ENCODE measurements at regions of chr1 and their contacts with region 1.

Region 1: GRCh38 chr1:183915625-183916510 is 110.9 kb downstream of the RGL1 start:
- DNase-seq: peak; percentile 44 to 87 (median 70)
- ATAC-seq: peak; percentile 99
- H3K4me3 ChIP-seq: no peak overlapping the region
- H3K4me3 Mint-ChIP-seq: peak overlapping the region; percentile 0
- H3K27ac ChIP-seq: no peak overlapping the region
- H3K27ac Mint-ChIP-seq: peak overlapping the region; percentile 30
- H3K4me1 ChIP-seq: peaks cover 4% of the 10 kb centered on the region
- H3K4me1 Mint-ChIP-seq: peaks cover 10% of the 10 kb centered on the region
- H3K27me3 ChIP-seq: no peaks in the 10 kb centered on the region
- H3K27me3 Mint-ChIP-seq: no peaks in the 10 kb centered on the region
- CTCF ChIP-seq: peak; percentile 83

Region 2: GRCh38 chr1:183281553-183282091 is 634.2 kb before region 1 on chr1:
- CTCF ChIA-PET with region 1: interaction called, 6 read pairs
- POLR2A ChIA-PET with region 1: no interaction called
- intact Hi-C with region 1: loop called (anchors 2 kb)
- DNase-seq: peak; percentile 38 to 77 (median 60)
- ATAC-seq: peak; percentile 55
- H3K4me3 ChIP-seq: no peak overlapping the region
- H3K4me3 Mint-ChIP-seq: no peak overlapping the region
- H3K27ac ChIP-seq: no peak overlapping the region
- H3K27ac Mint-ChIP-seq: no peak overlapping the region
- H3K4me1 ChIP-seq: no peaks in the 10 kb centered on the region
- H3K4me1 Mint-ChIP-seq: no peaks in the 10 kb centered on the region
- H3K27me3 ChIP-seq: no peaks in the 10 kb centered on the region
- H3K27me3 Mint-ChIP-seq: peaks cover 7% of the 10 kb centered on the region
- CTCF ChIP-seq: peak; percentile 67

Region 3: DNA sequence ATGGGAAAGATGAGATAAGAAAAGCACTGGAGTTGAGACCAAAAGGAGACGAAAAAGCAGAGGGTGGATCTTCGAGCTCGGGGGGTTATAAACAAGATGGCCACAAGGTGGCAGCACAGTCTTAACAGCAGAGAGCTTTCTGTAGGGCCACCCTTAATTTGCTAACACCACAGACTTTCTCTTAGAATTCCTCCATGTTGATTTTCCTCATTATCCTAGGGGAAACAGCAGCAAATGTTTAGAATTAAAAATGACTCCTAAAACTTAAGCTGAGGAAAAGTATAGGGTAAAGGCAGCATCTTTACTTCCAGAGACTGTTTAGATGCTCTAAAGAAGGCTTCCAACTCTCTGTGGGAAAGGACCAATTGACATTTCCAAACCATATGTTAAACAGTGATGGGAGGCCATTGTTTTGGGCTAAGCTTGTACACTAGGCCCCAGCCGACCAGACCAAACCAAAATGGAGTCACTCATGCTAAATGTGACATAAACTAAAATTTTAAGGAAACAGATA is 260.2 kb before region 1 on chr1:
- CTCF ChIA-PET with region 1: interaction called, 172 read pairs
- POLR2A ChIA-PET with region 1: interaction called, 4 read pairs
- intact Hi-C with region 1: loop called (anchors 1 kb)
- DNase-seq: peak; percentile 37 to 83 (median 77)
- ATAC-seq: peak; percentile 84
- H3K4me3 ChIP-seq: no peak overlapping the region
- H3K4me3 Mint-ChIP-seq: no peak overlapping the region
- H3K27ac ChIP-seq: no peak overlapping the region
- H3K27ac Mint-ChIP-seq: no peak overlapping the region
- H3K4me1 ChIP-seq: peaks cover 19% of the 10 kb centered on the region
- H3K4me1 Mint-ChIP-seq: peaks cover 29% of the 10 kb centered on the region
- H3K27me3 ChIP-seq: no peaks in the 10 kb centered on the region
- H3K27me3 Mint-ChIP-seq: no peaks in the 10 kb centered on the region
- CTCF ChIP-seq: peak; percentile 85

Region 4: GRCh38 chr1:183739741-183740271 is 176.1 kb before region 1 on chr1:
- CTCF ChIA-PET with region 1: interaction called, 3 read pairs
- POLR2A ChIA-PET with region 1: no interaction called
- intact Hi-C with region 1: loop called in 1 of 2 experiments (anchors 1 kb)
- DNase-seq: no peak
- ATAC-seq: no peak
- H3K4me3 ChIP-seq: no peak overlapping the region
- H3K4me3 Mint-ChIP-seq: no peak overlapping the region
- H3K27ac ChIP-seq: no peak overlapping the region
- H3K27ac Mint-ChIP-seq: no peak overlapping the region
- H3K4me1 ChIP-seq: no peaks in the 10 kb centered on the region
- H3K4me1 Mint-ChIP-seq: no peaks in the 10 kb centered on the region
- H3K27me3 ChIP-seq: no peaks in the 10 kb centered on the region
- H3K27me3 Mint-ChIP-seq: no peaks in the 10 kb centered on the region
- CTCF ChIP-seq: no peak

Region 5: GRCh38 chr1:183898001-183898396 is 17.9 kb before region 1 on chr1:
- CTCF ChIA-PET with region 1: interaction called, 17 read pairs
- POLR2A ChIA-PET with region 1: no interaction called
- intact Hi-C with region 1: no loop called
- DNase-seq: no peak
- ATAC-seq: no peak
- H3K4me3 ChIP-seq: no peak overlapping the region
- H3K4me3 Mint-ChIP-seq: no peak overlapping the region
- H3K27ac ChIP-seq: no peak overlapping the region
- H3K27ac Mint-ChIP-seq: no peak overlapping the region
- H3K4me1 ChIP-seq: no peaks in the 10 kb centered on the region
- H3K4me1 Mint-ChIP-seq: peaks cover 10% of the 10 kb centered on the region
- H3K27me3 ChIP-seq: no peaks in the 10 kb centered on the region
- H3K27me3 Mint-ChIP-seq: no peaks in the 10 kb centered on the region
- CTCF ChIP-seq: no peak

Region 6: DNA sequence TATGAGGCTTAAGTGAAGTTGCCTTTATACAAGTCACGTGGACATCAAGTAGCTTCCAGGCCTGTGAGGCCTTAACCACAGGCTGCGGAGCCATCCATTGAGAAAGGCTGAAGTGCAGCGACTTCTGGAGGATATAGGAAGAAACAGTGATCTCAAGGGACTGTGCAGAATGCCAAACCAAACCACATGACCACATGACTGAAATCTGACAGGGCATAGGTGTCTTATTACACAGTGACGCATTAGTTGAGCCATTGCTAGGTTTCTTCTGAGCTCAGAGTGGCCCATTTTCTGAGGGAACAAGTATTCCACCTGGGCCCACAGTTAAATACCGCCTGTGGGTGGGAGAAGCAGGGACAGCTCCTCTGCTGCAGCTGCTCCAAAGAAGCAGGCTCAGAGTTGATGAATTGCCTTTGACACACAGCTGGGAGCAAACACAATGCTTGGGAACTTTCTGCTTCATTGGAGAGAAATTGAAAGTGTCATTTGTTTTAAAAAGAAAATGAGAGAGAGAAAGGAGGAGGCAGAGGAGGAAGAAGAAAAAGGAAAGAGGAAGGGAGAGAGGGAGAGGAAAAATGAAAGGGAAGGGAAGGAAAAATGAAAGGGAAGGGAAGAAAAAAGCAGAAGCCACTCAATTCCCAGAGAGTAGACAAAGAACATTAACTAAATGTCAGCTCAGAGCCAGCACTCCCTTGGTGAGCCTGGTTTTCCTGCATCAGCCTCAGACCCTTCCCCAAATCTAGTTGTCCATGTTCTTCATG is 27.2 kb after region 1 on chr1:
- CTCF ChIA-PET with region 1: interaction called, 17 read pairs
- POLR2A ChIA-PET with region 1: interaction called, 4 read pairs
- intact Hi-C with region 1: no loop called
- DNase-seq: no peak
- ATAC-seq: no peak
- H3K4me3 ChIP-seq: no peak overlapping the region
- H3K4me3 Mint-ChIP-seq: no peak overlapping the region
- H3K27ac ChIP-seq: no peak overlapping the region
- H3K27ac Mint-ChIP-seq: no peak overlapping the region
- H3K4me1 ChIP-seq: no peaks in the 10 kb centered on the region
- H3K4me1 Mint-ChIP-seq: no peaks in the 10 kb centered on the region
- H3K27me3 ChIP-seq: no peaks in the 10 kb centered on the region
- H3K27me3 Mint-ChIP-seq: no peaks in the 10 kb centered on the region
- CTCF ChIP-seq: no peak

Region 7: DNA sequence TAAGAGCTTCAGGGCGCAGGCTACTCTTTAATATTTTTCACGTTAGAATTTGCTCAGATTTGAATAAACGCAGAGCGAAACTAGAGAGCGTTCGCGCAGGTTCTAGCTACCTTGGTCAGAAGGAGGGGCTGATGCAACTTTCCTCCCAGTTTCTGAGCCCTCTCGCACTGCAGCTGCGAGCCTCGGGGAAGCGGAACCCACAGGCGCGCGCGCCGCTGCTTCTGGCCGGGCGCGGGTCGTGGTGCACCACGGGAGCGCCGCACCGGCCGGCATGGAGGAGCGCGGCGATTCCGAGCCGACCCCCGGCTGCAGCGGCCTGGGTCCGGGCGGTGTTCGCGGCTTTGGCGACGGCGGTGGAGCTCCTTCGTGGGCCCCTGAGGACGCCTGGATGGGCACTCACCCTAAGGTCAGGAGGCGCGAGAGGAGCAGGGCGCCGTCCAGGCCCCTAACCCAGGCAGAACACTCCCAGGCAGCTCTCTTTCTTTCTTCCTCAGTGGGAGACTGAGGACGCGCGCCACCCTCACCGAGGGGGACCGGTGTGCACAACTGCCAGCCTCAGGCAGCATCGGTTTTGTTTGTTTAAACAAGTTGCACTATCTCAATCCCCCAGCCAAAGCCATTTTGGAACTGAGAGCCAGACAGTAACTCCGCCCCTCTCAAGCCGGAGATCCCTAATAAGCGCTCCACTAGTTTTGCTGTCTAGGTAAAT is 135.8 kb after region 1 on chr1 and contains the start of gene TSEN15:
- CTCF ChIA-PET with region 1: interaction called, 14 read pairs
- POLR2A ChIA-PET with region 1: interaction called, 7 read pairs
- intact Hi-C with region 1: no loop called
- DNase-seq: peak; percentile 49 to 89 (median 76)
- ATAC-seq: peak; percentile 95
- H3K4me3 ChIP-seq: peak within 1 kb of the TSS; percentile 86 to 94
- H3K4me3 Mint-ChIP-seq: peak within 1 kb of the TSS; percentile 98
- H3K27ac ChIP-seq: peak within 1 kb of the TSS; percentile 66 to 78
- H3K27ac Mint-ChIP-seq: peak within 1 kb of the TSS; percentile 98
- H3K4me1 ChIP-seq: peaks cover 21% of the 10 kb centered on the region
- H3K4me1 Mint-ChIP-seq: peaks cover 47% of the 10 kb centered on the region
- H3K27me3 ChIP-seq: no peaks in the 10 kb centered on the region
- H3K27me3 Mint-ChIP-seq: peaks cover 14% of the 10 kb centered on the region
- CTCF ChIP-seq: no peak
- total RNA-seq, gene TSEN15: 14.8 to 15.9 TPM

Measured in CD8-positive, alpha-beta T cell (primary cell).